ENCODE measurements at regions of chr16 and their contacts with region 1.

Region 1: DNA sequence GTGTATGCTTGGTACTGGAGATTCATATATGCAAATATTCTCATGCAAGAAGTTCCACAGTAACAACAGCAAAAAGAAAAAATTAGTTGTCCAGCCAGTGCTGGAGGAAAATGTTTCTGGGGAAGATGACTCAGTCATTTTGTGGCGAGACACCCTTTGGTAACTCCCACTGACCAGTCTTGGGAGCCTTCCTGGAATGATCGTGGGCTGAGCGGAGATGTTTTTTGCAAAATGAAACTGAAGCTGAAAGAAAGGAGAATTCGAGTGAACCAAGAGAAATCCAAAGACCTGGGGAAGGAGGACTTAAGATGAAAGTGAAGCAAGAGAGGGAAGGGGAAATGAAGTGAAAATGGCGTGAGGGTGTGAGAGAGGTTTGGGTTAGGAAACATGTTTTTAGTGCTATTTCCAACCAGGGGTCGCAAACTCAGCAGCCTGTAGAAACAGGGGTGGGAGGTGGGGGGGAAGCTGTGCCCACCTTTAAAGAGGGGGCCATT is 5.2 kb downstream of the ITPRIPL2 start:
- DNase-seq: peak; percentile 90
- H3K4me3 Mint-ChIP-seq: peak overlapping the region; percentile 76
- H3K27ac Mint-ChIP-seq: peak overlapping the region; percentile 93
- H3K4me1 Mint-ChIP-seq: peaks cover 43% of the 10 kb centered on the region
- H3K27me3 Mint-ChIP-seq: no peaks in the 10 kb centered on the region
- CTCF ChIP-seq: no peak

Region 2: GRCh38 chr16:19108409-19109287 is 10.3 kb before region 1 on chr16:
- CTCF ChIA-PET with region 1: interaction called, 3 read pairs
- POLR2A ChIA-PET with region 1: interaction called, 23 read pairs
- intact Hi-C with region 1: no loop called
- DNase-seq: no peak
- H3K4me3 Mint-ChIP-seq: no peak overlapping the region
- H3K27ac Mint-ChIP-seq: peak overlapping the region; percentile 77
- H3K4me1 Mint-ChIP-seq: peaks cover 14% of the 10 kb centered on the region
- H3K27me3 Mint-ChIP-seq: no peaks in the 10 kb centered on the region
- CTCF ChIP-seq: no peak

Region 3: DNA sequence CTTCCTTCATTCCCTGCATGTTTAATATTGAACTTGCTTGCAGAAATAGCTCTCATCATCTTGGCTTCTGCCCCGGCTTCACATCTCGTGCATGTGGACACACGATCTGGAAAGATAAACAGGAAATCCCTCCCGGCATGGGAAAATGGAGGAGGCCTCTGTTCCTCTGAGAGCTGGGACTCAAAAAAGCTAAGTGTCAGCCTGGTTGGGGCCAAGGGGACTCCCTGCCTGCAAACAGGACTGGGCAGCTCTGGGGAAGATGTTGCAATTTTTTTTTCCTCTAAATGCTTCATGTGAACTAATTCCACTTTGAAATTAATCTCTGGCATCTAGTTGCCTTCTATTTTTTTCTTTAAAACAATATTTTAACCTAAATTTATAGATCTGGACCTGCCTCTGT is 19.6 kb after region 1 on chr16:
- CTCF ChIA-PET with region 1: interaction called, 20 read pairs
- POLR2A ChIA-PET with region 1: interaction called, 298 read pairs
- intact Hi-C with region 1: no loop called
- DNase-seq: peak; percentile 99
- H3K4me3 Mint-ChIP-seq: peak overlapping the region; percentile 24
- H3K27ac Mint-ChIP-seq: peak overlapping the region; percentile 44
- H3K4me1 Mint-ChIP-seq: peaks cover 61% of the 10 kb centered on the region
- H3K27me3 Mint-ChIP-seq: no peaks in the 10 kb centered on the region
- CTCF ChIP-seq: no peak

Region 4: DNA sequence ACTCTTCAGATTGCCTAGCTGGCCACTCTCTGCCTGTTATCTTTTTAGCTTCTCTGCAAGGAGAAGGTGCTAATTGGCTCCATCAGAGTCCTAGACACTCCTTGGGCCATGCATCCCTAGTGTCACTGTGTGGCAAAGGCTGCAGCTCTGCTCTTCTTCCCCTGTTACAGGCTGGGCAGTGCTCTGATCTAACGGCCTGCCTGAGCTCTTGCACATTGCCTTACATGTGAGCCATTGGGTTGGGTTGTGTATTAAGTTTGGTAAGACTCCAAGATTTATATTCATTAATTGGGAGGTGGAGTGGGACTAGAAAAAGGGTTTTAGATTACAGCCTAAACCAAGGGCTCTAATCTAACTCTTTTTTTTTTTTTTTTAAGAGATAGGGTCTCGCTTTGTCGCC is 26.0 kb after region 1 on chr16:
- CTCF ChIA-PET with region 1: interaction called, 3 read pairs
- POLR2A ChIA-PET with region 1: interaction called, 298 read pairs
- intact Hi-C with region 1: no loop called
- DNase-seq: no peak
- H3K4me3 Mint-ChIP-seq: no peak overlapping the region
- H3K27ac Mint-ChIP-seq: no peak overlapping the region
- H3K4me1 Mint-ChIP-seq: peaks cover 19% of the 10 kb centered on the region
- H3K27me3 Mint-ChIP-seq: no peaks in the 10 kb centered on the region
- CTCF ChIP-seq: no peak

Region 5: DNA sequence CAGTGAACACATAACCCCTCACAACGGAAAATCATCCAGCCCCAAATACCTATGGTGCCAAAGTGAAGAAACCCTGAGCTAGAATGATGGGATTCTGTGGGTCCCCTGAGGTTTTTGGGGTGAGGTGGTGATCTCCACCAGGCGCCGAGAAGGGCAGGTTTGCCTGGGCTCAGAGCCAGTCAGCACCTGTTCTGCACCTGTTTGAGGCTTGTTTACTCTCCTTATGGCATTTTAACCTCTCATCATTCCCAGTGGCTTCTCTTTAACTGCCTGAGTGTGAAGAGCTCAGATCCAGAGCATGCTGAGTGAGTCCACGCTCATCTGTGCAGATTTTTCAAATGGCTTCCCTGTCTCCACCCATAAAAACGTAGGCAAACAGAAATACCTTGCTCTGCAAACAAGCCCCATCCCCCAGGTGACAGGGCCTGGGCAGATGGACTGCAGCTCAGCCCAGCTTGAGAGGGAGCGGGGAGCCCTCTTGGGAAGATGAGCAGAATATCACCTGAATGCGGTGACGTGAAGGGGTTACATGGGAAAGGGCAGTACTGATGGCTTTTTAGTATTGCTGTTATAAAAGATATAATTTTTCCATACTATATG is 126.4 kb after region 1 on chr16:
- CTCF ChIA-PET with region 1: no interaction called
- POLR2A ChIA-PET with region 1: no interaction called
- intact Hi-C with region 1: no loop called
- DNase-seq: no peak
- H3K4me3 Mint-ChIP-seq: no peak overlapping the region
- H3K27ac Mint-ChIP-seq: no peak overlapping the region
- H3K4me1 Mint-ChIP-seq: no peaks in the 10 kb centered on the region
- H3K27me3 Mint-ChIP-seq: peaks cover 14% of the 10 kb centered on the region
- CTCF ChIP-seq: no peak